ENCODE measurements at regions of chr6 and their contacts with region 1.

Region 1: DNA sequence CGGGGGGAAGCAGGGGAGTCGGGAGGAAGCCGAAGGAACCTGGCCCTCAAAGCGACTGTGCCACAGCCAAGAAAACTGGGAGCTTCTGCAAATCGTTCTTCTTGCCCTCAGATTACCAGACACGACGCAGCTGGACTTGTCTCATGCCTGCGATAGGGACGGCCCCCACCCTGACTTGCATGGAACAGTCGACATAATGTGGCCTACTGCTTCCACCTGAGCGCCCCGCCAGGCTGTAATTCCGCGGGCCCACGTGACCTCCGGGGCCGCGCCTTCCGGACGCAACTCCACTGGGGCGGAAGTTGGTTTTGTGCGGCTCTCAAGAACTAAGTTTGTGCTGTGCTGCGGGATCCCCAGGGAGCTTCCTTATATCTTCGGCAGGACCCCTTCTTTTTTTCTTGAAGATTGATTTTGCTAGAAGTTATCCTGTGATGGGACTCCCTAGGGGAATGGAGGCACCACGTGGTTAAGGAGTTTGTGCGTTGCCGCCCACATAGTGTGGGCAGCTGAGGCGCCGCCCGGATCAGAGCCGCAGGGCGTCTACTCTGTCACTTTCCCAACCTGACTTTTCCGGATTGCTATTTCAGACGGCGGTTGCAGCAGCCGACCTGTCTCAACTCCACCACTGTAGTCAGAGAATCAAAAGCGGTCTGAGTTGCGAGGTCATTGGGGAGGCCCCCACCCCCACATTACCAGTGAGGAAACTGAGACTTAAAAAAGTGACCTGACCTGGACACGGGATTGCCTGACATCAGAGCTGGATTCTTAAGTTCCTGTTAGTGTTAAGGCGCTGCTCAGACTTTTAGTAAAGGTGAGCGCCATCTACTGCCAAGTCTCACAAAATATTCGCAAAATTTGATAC is 540 bp upstream of the CD164 start:
- DNase-seq: peak; percentile 96
- H3K4me3 ChIP-seq: peak overlapping the region; percentile 70 to 99 (median 92)
- H3K27ac ChIP-seq: peak overlapping the region; percentile 93 to 100 (median 99)
- H3K4me1 ChIP-seq: peaks cover 0 to 41% (median 30%) of the 10 kb centered on the region in 4 donors
- H3K27me3 ChIP-seq: no peaks in the 10 kb centered on the region
- CTCF ChIP-seq: peak in 3 of 4 experiments; percentile 23 to 41 (median 38)
- EP300 ChIP-seq: peak in 1 of 4 donors; percentile 1
- POLR2A ChIP-seq: peak; percentile 4 to 14

Region 2: GRCh38 chr6:107489636-107490565 is 1892.9 kb before region 1 on chr6 and contains the start of gene SOBP:
- intact Hi-C with region 1: loop called (anchors 10 kb)
- DNase-seq: peak; percentile 89
- H3K4me3 ChIP-seq: peak within 1 kb of the TSS; percentile 77 to 86 (median 82)
- H3K27ac ChIP-seq: peak within 1 kb of the TSS; percentile 88 to 95 (median 92)
- H3K4me1 ChIP-seq: peaks cover 0 to 40% (median 25%) of the 10 kb centered on the region in 4 donors
- H3K27me3 ChIP-seq: peaks cover 0 to 6% (median 0%) of the 10 kb centered on the region in 3 donors
- CTCF ChIP-seq: no peak
- EP300 ChIP-seq: no peak
- POLR2A ChIP-seq: no peak
- total RNA-seq, gene SOBP: 16.8 to 38.5 (median 22.8) TPM

Region 3: GRCh38 chr6:109187399-109188114 is 195.2 kb before region 1 on chr6:
- intact Hi-C with region 1: loop called (anchors 1 kb)
- DNase-seq: peak; percentile 66
- H3K4me3 ChIP-seq: no peak overlapping the region
- H3K27ac ChIP-seq: no peak overlapping the region
- H3K4me1 ChIP-seq: no peaks in the 10 kb centered on the region
- H3K27me3 ChIP-seq: no peaks in the 10 kb centered on the region
- CTCF ChIP-seq: peak; percentile 59 to 92 (median 82)
- EP300 ChIP-seq: no peak
- POLR2A ChIP-seq: no peak

Region 4: DNA sequence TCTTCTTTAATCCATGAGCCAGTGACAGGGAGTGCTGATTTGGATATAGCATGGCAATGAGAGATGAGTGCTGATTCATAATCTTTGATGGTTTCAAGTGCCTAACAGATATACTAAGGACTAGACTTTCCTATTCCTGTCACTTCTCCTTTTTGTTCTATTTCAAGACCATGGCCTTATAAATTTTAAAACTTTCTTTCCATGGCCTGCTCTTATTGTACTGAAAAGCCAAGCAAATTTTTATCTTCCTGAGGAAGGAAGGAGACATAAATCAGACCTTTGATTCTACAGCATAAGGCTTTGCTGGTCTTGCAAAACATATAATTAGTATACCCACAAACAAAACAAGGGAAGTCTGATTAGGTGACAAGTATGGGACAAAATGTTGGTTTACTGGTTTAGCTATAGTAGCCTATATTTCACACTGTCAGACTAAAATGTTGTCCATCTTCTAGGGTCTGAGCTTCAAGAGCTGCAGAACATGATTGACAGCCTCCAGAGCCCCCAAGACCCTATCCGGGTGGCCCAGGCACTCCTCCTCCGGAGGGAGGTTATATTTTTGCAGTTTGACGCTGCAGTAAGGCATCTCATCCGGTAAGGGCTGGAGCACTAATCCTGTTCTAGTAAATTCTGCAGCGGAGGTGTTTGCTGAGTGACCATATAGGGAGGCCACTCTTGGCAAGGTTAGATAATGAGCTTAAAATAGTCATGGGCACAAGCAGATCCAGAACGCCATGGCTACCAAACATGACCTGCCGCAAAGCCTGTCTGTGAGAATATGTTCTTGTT is 82.8 kb before region 1 on chr6:
- intact Hi-C with region 1: loop called (anchors 1 kb)
- DNase-seq: peak; percentile 82
- H3K4me3 ChIP-seq: no peak overlapping the region
- H3K27ac ChIP-seq: peak overlapping the region; percentile 78 to 85 (median 84)
- H3K4me1 ChIP-seq: peaks cover 0 to 60% (median 41%) of the 10 kb centered on the region in 4 donors
- H3K27me3 ChIP-seq: no peaks in the 10 kb centered on the region
- CTCF ChIP-seq: no peak
- EP300 ChIP-seq: peak in 2 of 4 donors; percentile 38 to 76
- POLR2A ChIP-seq: no peak

Region 5: GRCh38 chr6:109482905-109483735 is 100.3 kb after region 1 on chr6 and contains the start of gene ZBTB24:
- intact Hi-C with region 1: loop called (anchors 1 kb)
- DNase-seq: peak; percentile 95
- H3K4me3 ChIP-seq: peak within 1 kb of the TSS; percentile 76 to 100 (median 88)
- H3K27ac ChIP-seq: peak within 1 kb of the TSS; percentile 77 to 90 (median 84)
- H3K4me1 ChIP-seq: peaks cover 3 to 44% (median 42%) of the 10 kb centered on the region in 4 donors
- H3K27me3 ChIP-seq: no peaks in the 10 kb centered on the region
- CTCF ChIP-seq: no peak
- EP300 ChIP-seq: no peak
- POLR2A ChIP-seq: no peak
- total RNA-seq, gene ZBTB24: 4.6 to 8.2 (median 6.3) TPM